Heart right ventricle (tissue), 16 donors: ENCODE measurements at regions of chr2 and their contacts with region 1.

Region 1: DNA sequence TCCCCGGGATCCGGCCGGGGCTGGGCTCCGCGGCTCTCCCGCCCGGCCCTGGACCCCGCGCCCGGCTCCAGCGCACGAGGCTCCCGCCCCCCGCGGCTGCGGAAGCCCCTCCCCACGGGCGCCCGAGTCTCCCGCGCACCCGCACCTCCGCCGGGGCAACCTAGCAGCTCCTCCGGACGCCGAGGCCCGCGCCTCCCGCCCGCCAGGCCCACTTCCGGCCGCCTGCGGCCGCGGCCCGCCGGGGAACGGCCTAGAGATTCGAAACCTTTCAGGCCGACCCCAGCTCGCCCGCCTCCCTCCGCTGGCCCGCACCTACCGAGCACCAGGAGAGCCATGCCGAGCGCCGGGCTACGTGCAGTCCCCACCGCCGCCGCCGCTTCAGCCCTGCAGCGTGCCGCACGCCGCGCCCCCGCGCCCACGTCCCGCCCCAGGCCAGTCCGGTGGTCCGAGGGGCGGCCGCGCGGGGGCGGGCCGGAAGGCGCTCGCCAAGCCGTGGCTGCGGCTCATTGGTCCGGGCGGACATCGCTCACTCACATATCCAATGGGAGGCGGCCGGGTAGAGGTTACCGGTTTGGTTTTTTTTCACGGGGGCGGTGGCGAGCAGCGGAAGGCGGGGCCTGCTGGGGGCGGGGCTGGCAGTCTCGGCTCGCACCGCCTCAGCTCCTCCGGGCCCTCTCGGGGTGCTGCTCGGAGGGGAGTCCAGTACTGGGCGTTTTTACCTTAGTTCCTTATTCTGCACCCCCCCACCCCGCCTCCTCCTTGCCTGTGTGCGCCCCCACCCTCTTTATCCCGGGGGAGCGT is at the start of gene PDIA6:
- DNase-seq: peak; percentile 99
- ATAC-seq: peak; percentile 96 to 100 (median 98)
- H3K4me3 ChIP-seq: peak within 1 kb of the TSS; percentile 56 to 95 (median 85)
- H3K27ac ChIP-seq: peak within 1 kb of the TSS; percentile 79 to 95 (median 94)
- H3K4me1 ChIP-seq: peaks cover 3 to 63% (median 46%) of the 10 kb centered on the region in 9 donors
- H3K27me3 ChIP-seq: no peaks in the 10 kb centered on the region
- CTCF ChIP-seq: peak in 2 of 9 donors; percentile 16 to 27
- total RNA-seq, gene PDIA6: 86.9 to 174 (median 107) TPM

Region 2: DNA sequence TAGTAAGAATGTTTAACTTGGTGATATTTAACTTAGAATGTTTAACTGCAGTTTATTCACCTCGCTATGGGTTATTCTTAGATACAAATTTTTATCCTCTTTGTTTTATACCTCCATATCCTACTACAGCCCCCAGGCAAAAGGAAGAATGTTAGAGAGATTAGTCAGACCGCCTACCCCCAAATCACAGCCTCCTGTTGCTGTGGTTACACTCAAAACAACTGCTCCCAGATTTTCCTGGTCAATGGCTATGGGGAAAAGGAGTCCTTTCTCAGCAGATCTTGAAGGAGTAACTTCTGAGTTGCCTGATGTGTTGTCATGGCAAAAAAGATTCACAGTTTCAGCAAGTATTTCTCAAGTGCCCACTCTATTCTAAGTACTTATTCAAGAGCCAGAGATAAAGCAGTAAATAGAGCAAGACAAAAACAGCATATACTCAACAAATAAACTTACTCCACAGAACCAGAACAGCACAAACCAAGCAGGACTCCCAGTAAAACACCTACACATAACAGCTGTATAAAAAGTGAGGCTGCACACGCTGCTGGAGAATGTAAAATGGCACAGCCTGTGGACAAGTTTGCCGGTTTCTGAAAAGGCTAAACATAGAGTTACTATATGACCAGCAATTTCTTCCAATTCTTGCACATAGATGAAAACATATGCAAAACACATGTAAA is 227.6 kb before region 1 on chr2:
- intact Hi-C with region 1: no loop called
- DNase-seq: no peak
- ATAC-seq: peak in 2 of 8 donors; percentile 21 to 39
- H3K4me3 ChIP-seq: no peak overlapping the region
- H3K27ac ChIP-seq: no peak overlapping the region
- H3K4me1 ChIP-seq: peaks cover 0 to 13% (median 3%) of the 10 kb centered on the region in 9 donors
- H3K27me3 ChIP-seq: no peaks in the 10 kb centered on the region
- CTCF ChIP-seq: no peak

Region 3: GRCh38 chr2:11154923-11155380 is 342.4 kb after region 1 on chr2:
- intact Hi-C with region 1: loop called in 1 of 10 experiments (anchors 1 kb)
- DNase-seq: peak; percentile 99
- ATAC-seq: peak; percentile 93 to 97 (median 95)
- H3K4me3 ChIP-seq: peak overlapping the region; percentile 41 to 99 (median 84)
- H3K27ac ChIP-seq: peak overlapping the region; percentile 64 to 98 (median 94)
- H3K4me1 ChIP-seq: peaks cover 0 to 27% (median 19%) of the 10 kb centered on the region in 9 donors
- H3K27me3 ChIP-seq: no peaks in the 10 kb centered on the region
- CTCF ChIP-seq: no peak